ENCODE measurements at regions of chr2 and their contacts with region 1.

Region 1: GRCh38 chr2:177164584-177165052 is 48.0 kb upstream of the HNRNPA3 start:
- DNase-seq: peak; percentile 72
- ATAC-seq: peak; percentile 68
- H3K4me3 ChIP-seq: peak overlapping the region; percentile 40
- H3K27ac ChIP-seq: peak overlapping the region; percentile 34; the same call in 1 of the 2 replicates
- H3K4me1 ChIP-seq: peaks cover 9% of the 10 kb centered on the region
- H3K27me3 ChIP-seq: no peaks in the 10 kb centered on the region
- CTCF ChIP-seq: peak; percentile 99
- POLR2A ChIP-seq: peak; percentile 48; the same call in 1 of the 2 replicates
- RAD21 ChIP-seq: peak; percentile 100

Region 2: GRCh38 chr2:176804392-176804791 is 360.2 kb before region 1 on chr2:
- CTCF ChIA-PET with region 1: no interaction called
- POLR2A ChIA-PET with region 1: no interaction called
- dilution Hi-C with region 1: no loop called
- in situ Hi-C with region 1: no loop called
- intact Hi-C with region 1: no loop called
- DNase-seq: no peak
- ATAC-seq: no peak
- H3K4me3 ChIP-seq: no peak overlapping the region
- H3K27ac ChIP-seq: no peak overlapping the region
- H3K4me1 ChIP-seq: no peaks in the 10 kb centered on the region
- H3K27me3 ChIP-seq: no peaks in the 10 kb centered on the region
- CTCF ChIP-seq: no peak
- POLR2A ChIP-seq: no peak
- RAD21 ChIP-seq: no peak

Region 3: GRCh38 chr2:177263451-177264208 is 99.0 kb after region 1 on chr2:
- CTCF ChIA-PET with region 1: interaction called, 29 read pairs
- POLR2A ChIA-PET with region 1: interaction called, 9 read pairs
- dilution Hi-C with region 1: no loop called
- in situ Hi-C with region 1: no loop called
- intact Hi-C with region 1: loop called (anchors 1 kb)
- DNase-seq: peak; percentile 97
- ATAC-seq: peak; percentile 50
- H3K4me3 ChIP-seq: peak overlapping the region; percentile 69
- H3K27ac ChIP-seq: peak overlapping the region; percentile 89
- H3K4me1 ChIP-seq: peaks cover 3% of the 10 kb centered on the region
- H3K27me3 ChIP-seq: no peaks in the 10 kb centered on the region
- CTCF ChIP-seq: peak; percentile 90
- POLR2A ChIP-seq: peak; percentile 62
- RAD21 ChIP-seq: peak; percentile 77

Region 4: GRCh38 chr2:177332041-177332991 is 167.7 kb after region 1 on chr2:
- CTCF ChIA-PET with region 1: interaction called, 22 read pairs
- POLR2A ChIA-PET with region 1: interaction called, 3 read pairs
- dilution Hi-C with region 1: no loop called
- in situ Hi-C with region 1: loop called (anchors 5 kb)
- intact Hi-C with region 1: loop called (anchors 1 kb)
- DNase-seq: peak; percentile 83
- ATAC-seq: peak; percentile 74
- H3K4me3 ChIP-seq: no peak overlapping the region
- H3K27ac ChIP-seq: peak overlapping the region; percentile 98
- H3K4me1 ChIP-seq: peaks cover 18% of the 10 kb centered on the region
- H3K27me3 ChIP-seq: no peaks in the 10 kb centered on the region
- CTCF ChIP-seq: peak; percentile 78
- POLR2A ChIP-seq: no peak
- RAD21 ChIP-seq: peak; percentile 78

Region 5: DNA sequence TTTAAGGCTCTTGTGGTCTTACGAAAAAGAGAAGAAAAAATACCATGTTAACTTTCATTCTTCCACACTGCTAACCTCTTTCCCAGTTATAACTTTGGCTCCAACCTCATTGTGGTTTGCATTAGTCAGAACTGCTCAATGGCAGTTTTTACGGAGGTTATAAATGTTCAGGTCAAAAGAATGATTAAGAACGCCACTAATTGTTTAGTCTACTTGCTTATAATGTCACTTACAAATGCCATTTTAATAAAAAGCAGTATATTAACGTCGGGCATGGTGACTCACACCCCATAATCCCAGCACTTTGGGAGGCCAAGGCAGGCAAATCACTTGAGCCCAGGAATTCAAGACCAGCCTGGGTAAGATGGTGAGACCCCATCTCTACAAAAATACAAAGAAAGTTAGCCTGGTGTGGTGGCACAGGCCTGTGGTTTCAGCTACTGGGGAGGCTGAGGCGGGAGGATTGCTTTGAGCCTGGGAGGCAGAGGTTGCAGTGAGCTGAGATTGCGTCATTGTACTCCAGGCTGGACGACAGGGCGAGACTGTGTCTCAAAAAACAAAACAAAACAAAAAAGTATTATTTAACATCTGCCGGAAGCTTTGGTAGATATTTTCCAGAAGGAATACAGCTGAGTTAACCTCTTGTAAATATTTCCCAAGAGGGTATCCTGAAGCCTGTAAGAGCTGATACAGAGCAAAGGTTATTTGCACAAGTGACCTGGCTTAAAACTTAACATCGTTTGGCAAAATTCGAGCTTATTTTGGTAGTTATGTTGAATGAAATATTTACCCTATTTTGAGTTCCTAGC is 233.1 kb after region 1 on chr2:
- CTCF ChIA-PET with region 1: interaction called, 7 read pairs
- POLR2A ChIA-PET with region 1: interaction called, 6 read pairs
- dilution Hi-C with region 1: no loop called
- in situ Hi-C with region 1: no loop called
- intact Hi-C with region 1: loop called (anchors 5 kb)
- DNase-seq: peak; percentile 89
- ATAC-seq: peak; percentile 38
- H3K4me3 ChIP-seq: no peak overlapping the region
- H3K27ac ChIP-seq: peak overlapping the region; percentile 34
- H3K4me1 ChIP-seq: peaks cover 6% of the 10 kb centered on the region
- H3K27me3 ChIP-seq: no peaks in the 10 kb centered on the region
- CTCF ChIP-seq: no peak
- POLR2A ChIP-seq: no peak
- RAD21 ChIP-seq: no peak

Region 6: DNA sequence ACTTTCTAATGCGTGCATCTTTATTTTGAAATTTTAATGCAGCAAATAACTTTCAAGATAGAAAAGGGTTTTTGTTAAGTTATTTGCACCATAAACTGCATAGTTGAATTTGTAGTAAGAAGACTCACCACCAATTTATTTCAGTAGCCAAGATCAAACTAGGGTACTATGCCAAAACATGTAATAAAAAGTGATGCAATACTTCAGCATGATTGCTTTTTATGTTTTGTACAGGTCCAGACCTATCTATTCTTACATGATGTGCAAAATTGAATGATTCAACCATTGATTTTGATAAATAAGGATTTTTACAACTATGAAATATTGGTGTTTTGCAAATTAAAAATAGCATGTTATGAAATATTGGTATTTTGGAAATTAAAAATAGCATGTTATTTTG is 254.7 kb after region 1 on chr2:
- CTCF ChIA-PET with region 1: interaction called, 7 read pairs
- POLR2A ChIA-PET with region 1: interaction called, 3 read pairs
- dilution Hi-C with region 1: no loop called
- in situ Hi-C with region 1: loop called (anchors 5 kb)
- intact Hi-C with region 1: loop called (anchors 1 kb)
- DNase-seq: peak; percentile 61
- ATAC-seq: no peak
- H3K4me3 ChIP-seq: no peak overlapping the region
- H3K27ac ChIP-seq: no peak overlapping the region
- H3K4me1 ChIP-seq: no peaks in the 10 kb centered on the region
- H3K27me3 ChIP-seq: no peaks in the 10 kb centered on the region
- CTCF ChIP-seq: no peak
- POLR2A ChIP-seq: no peak
- RAD21 ChIP-seq: no peak

Region 7: DNA sequence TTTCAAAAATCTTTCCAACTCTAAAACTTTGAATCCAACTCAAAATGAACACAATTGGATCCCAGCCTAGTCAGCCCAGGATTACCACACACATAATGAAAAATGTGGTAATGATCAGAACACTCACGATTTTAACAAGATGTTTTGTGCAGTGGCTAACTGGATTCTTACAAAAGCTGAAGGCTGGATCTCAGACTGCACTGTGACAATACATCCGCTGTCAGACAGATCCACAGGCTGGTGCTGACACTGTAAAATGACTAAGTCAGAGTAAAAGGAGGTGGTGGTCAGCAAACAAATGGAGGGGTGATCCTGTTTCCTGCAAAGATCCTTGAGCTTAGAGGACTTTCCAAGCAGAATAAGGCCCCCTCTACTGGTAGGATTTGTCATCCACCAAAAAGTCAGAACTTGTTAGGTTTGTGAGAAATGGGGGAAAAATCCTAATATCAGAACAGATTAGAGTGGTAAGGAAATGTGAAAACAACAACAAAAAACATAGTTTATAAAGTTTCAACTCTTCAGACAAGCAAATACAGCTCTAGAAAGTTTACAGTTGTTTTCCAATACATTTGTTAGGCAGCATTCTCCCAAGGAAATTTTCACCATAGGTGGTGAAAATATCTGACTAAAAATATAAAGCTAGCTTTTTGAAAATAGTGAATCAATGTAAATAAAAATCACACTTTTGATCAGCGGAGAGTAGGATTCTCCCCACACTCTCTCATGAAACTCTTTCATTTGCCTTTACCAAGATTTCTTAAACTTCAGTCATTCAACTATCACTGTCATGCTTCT is 439.9 kb after region 1 on chr2:
- CTCF ChIA-PET with region 1: interaction called, 4 read pairs
- POLR2A ChIA-PET with region 1: no interaction called
- dilution Hi-C with region 1: no loop called
- in situ Hi-C with region 1: loop called (anchors 10 kb)
- intact Hi-C with region 1: loop called (anchors 1 kb)
- DNase-seq: peak; percentile 71
- ATAC-seq: peak; percentile 91
- H3K4me3 ChIP-seq: no peak overlapping the region
- H3K27ac ChIP-seq: no peak overlapping the region; the same call in 1 of the 2 replicates
- H3K4me1 ChIP-seq: peaks cover 2% of the 10 kb centered on the region
- H3K27me3 ChIP-seq: peaks cover 4% of the 10 kb centered on the region; the same call in 1 of the 2 replicates
- CTCF ChIP-seq: peak; percentile 72
- POLR2A ChIP-seq: no peak
- RAD21 ChIP-seq: peak; percentile 63

Region 8: GRCh38 chr2:177763532-177764265 is 599.1 kb after region 1 on chr2:
- CTCF ChIA-PET with region 1: interaction called, 9 read pairs
- POLR2A ChIA-PET with region 1: no interaction called
- dilution Hi-C with region 1: no loop called
- in situ Hi-C with region 1: loop called (anchors 10 kb)
- intact Hi-C with region 1: loop called (anchors 2 kb)
- DNase-seq: peak; percentile 58
- ATAC-seq: peak; percentile 98
- H3K4me3 ChIP-seq: no peak overlapping the region
- H3K27ac ChIP-seq: no peak overlapping the region
- H3K4me1 ChIP-seq: no peaks in the 10 kb centered on the region
- H3K27me3 ChIP-seq: peaks cover 4% of the 10 kb centered on the region; the same call in 1 of the 2 replicates
- CTCF ChIP-seq: peak; percentile 71
- POLR2A ChIP-seq: no peak
- RAD21 ChIP-seq: peak; percentile 55